Astrocyte of the spinal cord (primary cell): ENCODE measurements at regions of chr9 and their contacts with region 1.

Region 1: DNA sequence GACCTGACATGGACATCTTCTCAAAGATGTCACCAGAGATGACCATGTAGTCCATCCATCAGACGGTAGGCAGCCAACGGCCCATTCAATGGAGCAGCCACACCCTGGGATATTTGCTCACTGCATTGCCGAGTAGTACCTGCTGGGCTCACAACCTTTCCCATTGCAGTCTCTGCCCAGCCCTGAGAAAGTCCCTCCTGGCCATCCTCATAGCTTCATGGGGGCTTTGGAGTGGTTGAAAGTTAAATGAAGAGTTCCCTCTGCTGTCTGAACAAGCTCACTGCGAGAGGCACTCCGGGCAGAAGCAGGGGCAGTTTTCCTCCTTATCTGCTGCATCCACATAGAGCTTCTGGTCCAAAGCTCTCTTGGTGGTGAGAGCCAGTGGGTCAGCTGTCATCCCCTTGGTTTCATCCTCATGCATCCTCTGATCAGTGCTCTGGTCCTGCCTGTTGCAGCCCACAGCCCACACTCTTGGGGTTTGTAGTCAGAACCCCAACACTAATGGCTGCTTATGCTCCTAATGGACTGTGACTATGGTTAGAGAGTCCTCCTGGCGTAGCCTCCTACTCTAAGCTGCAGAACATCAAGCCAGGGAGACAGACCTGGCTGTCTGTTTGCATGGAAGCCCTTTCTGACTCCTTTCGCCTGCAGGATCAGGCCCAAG is 23.4 kb downstream of the TNFSF8 start:
- DNase-seq: peak; percentile 52
- H3K4me3 ChIP-seq: no peak overlapping the region
- CTCF ChIP-seq: peak; percentile 83

Region 2: DNA sequence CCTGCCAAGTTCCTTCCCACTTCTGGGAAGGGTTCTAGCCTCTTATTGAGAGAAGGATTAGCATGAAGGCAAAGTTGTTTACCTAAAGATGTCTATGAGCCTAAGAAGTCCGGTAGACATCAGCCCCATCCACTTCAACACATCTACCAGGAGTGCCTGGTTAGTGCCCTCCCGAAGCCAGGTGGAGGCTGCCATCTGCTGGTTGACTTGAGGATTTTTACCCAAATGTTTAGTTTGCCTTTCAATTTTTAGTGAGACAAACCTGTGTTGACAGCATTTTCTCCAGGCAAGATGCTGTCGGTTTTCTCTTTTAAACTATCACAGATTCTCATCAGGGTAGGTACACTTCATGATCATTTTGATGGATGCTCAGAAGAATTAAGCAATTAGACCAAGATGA is 107.0 kb after region 1 on chr9:
- in situ Hi-C with region 1: loop called (anchors 25 kb)
- DNase-seq: peak; percentile 78
- H3K4me3 ChIP-seq: no peak overlapping the region
- CTCF ChIP-seq: peak; percentile 66